ENCODE measurements at regions of chr6 and their contacts with region 1.

Region 1: DNA sequence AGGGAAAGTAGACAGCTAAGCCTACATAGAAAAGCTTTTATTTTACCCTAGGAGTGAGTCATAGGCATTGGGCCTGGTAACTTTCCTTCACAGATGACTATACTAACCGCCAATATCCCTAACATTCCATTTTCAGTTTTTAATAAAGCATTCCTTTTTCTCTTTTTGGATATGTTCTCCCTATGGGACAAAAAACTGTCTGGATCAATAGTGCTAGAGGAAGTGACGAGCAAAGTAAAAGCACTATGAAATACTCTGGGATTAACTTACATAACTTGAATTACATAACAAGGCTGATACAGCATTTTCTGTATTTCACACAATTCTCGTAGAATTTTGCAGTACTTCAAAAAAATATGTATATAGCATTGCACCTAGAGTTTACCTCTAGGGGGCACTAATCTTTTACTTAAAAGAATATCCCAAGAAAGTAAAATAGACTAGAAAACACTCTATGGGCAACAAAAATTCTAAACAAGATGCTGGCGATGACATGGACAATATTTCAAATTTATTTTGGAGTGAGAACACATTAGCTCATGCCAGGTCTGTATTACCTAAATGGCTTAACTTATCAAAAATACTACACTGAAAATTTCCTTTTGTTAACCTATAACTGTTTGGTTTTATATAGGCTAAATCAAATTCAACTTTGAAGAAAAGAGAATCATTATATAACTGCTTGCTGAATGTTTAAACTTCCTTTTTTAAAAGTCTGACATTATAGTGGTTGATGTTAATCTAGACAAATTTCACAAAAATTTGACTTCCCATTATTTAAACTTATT is 66.3 kb upstream of the DST start:
- DNase-seq: no peak
- ATAC-seq: peak; percentile 72
- H3K4me3 ChIP-seq: no peak overlapping the region
- H3K27ac ChIP-seq: 0 out of 2 replicates have a peak overlapping the region, but pooled peaks have one; percentile 1
- H3K4me1 ChIP-seq: peaks cover 8% of the 10 kb centered on the region
- H3K27me3 ChIP-seq: no peaks in the 10 kb centered on the region
- CTCF ChIP-seq: peak; percentile 29 to 54 (median 53); a peak in 4 of 6 replicates
- EP300 ChIP-seq: no peak
- POLR2A ChIP-seq: no peak
- RAD21 ChIP-seq: peak; percentile 45

Region 2: GRCh38 chr6:56292505-56293181 is 416.4 kb before region 1 on chr6:
- CTCF ChIA-PET with region 1: no interaction called
- POLR2A ChIA-PET with region 1: no interaction called
- RAD21 ChIA-PET with region 1: no interaction called
- SMC1A ChIA-PET with region 1: no interaction called
- in situ Hi-C with region 1: no loop called
- intact Hi-C with region 1: no loop called
- DNase-seq: no peak
- ATAC-seq: peak; percentile 70
- H3K4me3 ChIP-seq: no peak overlapping the region
- H3K27ac ChIP-seq: no peak overlapping the region
- H3K4me1 ChIP-seq: no peaks in the 10 kb centered on the region
- H3K27me3 ChIP-seq: no peaks in the 10 kb centered on the region; a peak in 1 of 4 replicates
- CTCF ChIP-seq: peak; percentile 17 to 52 (median 27); a peak in 4 of 6 replicates
- EP300 ChIP-seq: no peak
- POLR2A ChIP-seq: no peak
- RAD21 ChIP-seq: peak; percentile 79

Region 3: GRCh38 chr6:56693246-56693607 is 15.8 kb before region 1 on chr6:
- CTCF ChIA-PET with region 1: interaction called, 37 read pairs
- POLR2A ChIA-PET with region 1: no interaction called
- RAD21 ChIA-PET with region 1: interaction called, 3 read pairs
- SMC1A ChIA-PET with region 1: interaction called, 13 read pairs
- in situ Hi-C with region 1: no loop called
- intact Hi-C with region 1: no loop called
- DNase-seq: no peak
- ATAC-seq: no peak
- H3K4me3 ChIP-seq: no peak overlapping the region
- H3K27ac ChIP-seq: no peak overlapping the region
- H3K4me1 ChIP-seq: peaks cover 12% of the 10 kb centered on the region
- H3K27me3 ChIP-seq: no peaks in the 10 kb centered on the region
- CTCF ChIP-seq: no peak
- EP300 ChIP-seq: no peak
- POLR2A ChIP-seq: no peak
- RAD21 ChIP-seq: no peak

Region 4: DNA sequence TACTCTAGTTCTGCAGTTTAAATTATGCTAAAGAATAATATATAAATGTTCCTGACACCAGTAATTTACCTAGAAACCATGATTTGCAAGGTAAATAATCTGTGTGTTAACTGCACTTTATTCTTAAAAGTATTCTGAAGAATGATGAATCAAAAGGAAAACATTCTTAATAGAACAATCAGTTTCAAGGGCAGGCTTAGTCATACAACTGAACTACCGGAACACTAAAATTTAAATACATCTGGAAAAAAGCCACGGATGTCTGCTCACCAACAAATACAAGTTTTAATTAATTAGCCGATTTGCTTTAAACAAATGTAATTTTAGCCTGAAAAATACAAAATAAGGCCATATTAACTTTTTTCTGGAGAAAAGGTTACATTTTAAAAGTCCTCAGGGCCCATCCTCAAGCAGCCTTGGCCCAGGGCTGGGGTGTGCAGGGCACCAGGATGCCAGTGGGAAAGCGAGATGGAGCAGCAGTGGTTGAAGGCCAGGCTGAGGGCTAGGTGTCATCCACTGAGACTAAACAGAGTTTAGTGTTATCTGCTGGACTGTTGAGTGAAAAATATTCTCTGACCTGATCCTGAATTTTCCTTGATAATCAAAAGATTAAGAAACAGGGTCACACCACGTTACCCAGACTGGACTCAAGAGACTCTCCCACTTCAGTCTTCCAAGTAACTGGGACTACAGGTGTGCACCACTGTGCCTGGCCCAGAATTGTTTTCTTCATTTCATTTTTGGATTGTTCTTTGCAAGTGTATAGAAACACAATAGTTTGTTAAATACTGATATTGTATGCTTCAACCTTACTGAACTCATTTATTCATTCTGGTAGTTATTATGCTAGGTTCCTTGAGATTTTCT is 21.9 kb after region 1 on chr6:
- CTCF ChIA-PET with region 1: interaction called, 105 read pairs
- POLR2A ChIA-PET with region 1: interaction called, 4 read pairs
- RAD21 ChIA-PET with region 1: interaction called, 12 read pairs
- SMC1A ChIA-PET with region 1: interaction called, 17 read pairs
- in situ Hi-C with region 1: no loop called
- intact Hi-C with region 1: no loop called
- DNase-seq: no peak
- ATAC-seq: 0 out of 3 replicates have a peak, but pooled peaks have one; percentile 26
- H3K4me3 ChIP-seq: no peak overlapping the region
- H3K27ac ChIP-seq: no peak overlapping the region
- H3K4me1 ChIP-seq: peaks cover 13% of the 10 kb centered on the region
- H3K27me3 ChIP-seq: no peaks in the 10 kb centered on the region
- CTCF ChIP-seq: no peak
- EP300 ChIP-seq: no peak
- POLR2A ChIP-seq: no peak
- RAD21 ChIP-seq: no peak

Region 5: DNA sequence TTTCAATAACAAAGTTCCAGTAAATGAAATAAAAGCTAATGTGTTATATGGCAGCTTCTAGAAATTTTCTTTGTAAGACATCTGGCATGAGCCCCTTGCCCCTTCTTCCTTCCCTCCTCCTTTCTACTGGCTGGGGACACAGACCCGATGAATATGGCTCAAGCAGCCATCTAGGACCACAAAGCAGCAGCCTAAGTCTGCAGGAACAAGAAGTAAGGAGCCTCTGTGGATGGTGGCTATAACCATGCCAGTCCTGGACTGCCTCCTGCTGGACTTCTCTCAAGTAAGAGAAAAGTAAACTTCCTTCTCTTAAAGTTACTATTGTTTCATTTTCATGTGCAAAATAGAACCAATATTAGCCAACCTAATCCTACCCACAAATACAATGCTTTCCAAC is 48.6 kb after region 1 on chr6:
- CTCF ChIA-PET with region 1: interaction called, 260 read pairs
- POLR2A ChIA-PET with region 1: interaction called, 5 read pairs
- RAD21 ChIA-PET with region 1: interaction called, 181 read pairs
- SMC1A ChIA-PET with region 1: interaction called, 396 read pairs
- in situ Hi-C with region 1: no loop called
- intact Hi-C with region 1: loop called (anchors 1 kb)
- DNase-seq: no peak
- ATAC-seq: peak; percentile 52
- H3K4me3 ChIP-seq: no peak overlapping the region
- H3K27ac ChIP-seq: peak overlapping the region; percentile 54
- H3K4me1 ChIP-seq: peaks cover 76% of the 10 kb centered on the region
- H3K27me3 ChIP-seq: no peaks in the 10 kb centered on the region
- CTCF ChIP-seq: peak; percentile 42 to 49 (median 43); a peak in 5 of 6 replicates
- EP300 ChIP-seq: no peak
- POLR2A ChIP-seq: no peak
- RAD21 ChIP-seq: peak; percentile 75

Region 6: GRCh38 chr6:56772737-56773184 is 63.8 kb after region 1 on chr6:
- CTCF ChIA-PET with region 1: interaction called, 61 read pairs
- POLR2A ChIA-PET with region 1: no interaction called
- RAD21 ChIA-PET with region 1: interaction called, 44 read pairs
- SMC1A ChIA-PET with region 1: interaction called, 396 read pairs
- in situ Hi-C with region 1: no loop called
- intact Hi-C with region 1: no loop called
- DNase-seq: no peak
- ATAC-seq: peak; percentile 53
- H3K4me3 ChIP-seq: no peak overlapping the region
- H3K27ac ChIP-seq: no peak overlapping the region
- H3K4me1 ChIP-seq: peaks cover 41% of the 10 kb centered on the region
- H3K27me3 ChIP-seq: no peaks in the 10 kb centered on the region
- CTCF ChIP-seq: 0 out of 6 replicates have a peak, but pooled peaks of 2 of the 3 experiments have one; percentile 10 to 16
- EP300 ChIP-seq: no peak
- POLR2A ChIP-seq: no peak
- RAD21 ChIP-seq: peak; percentile 25; the same call in 1 of the 2 replicates

Region 7: GRCh38 chr6:56862415-56863175 is 153.6 kb after region 1 on chr6:
- CTCF ChIA-PET with region 1: interaction called, 16 read pairs
- POLR2A ChIA-PET with region 1: no interaction called
- RAD21 ChIA-PET with region 1: interaction called, 4 read pairs
- SMC1A ChIA-PET with region 1: interaction called, 23 read pairs
- in situ Hi-C with region 1: no loop called
- intact Hi-C with region 1: no loop called
- DNase-seq: no peak
- ATAC-seq: peak; percentile 57
- H3K4me3 ChIP-seq: no peak overlapping the region
- H3K27ac ChIP-seq: no peak overlapping the region
- H3K4me1 ChIP-seq: peaks cover 17% of the 10 kb centered on the region
- H3K27me3 ChIP-seq: no peaks in the 10 kb centered on the region
- CTCF ChIP-seq: no peak
- EP300 ChIP-seq: no peak
- POLR2A ChIP-seq: no peak
- RAD21 ChIP-seq: no peak

Region 8: GRCh38 chr6:56984361-56984760 is 275.4 kb after region 1 on chr6:
- CTCF ChIA-PET with region 1: no interaction called
- POLR2A ChIA-PET with region 1: no interaction called
- RAD21 ChIA-PET with region 1: no interaction called
- SMC1A ChIA-PET with region 1: no interaction called
- in situ Hi-C with region 1: no loop called
- intact Hi-C with region 1: no loop called
- DNase-seq: no peak
- ATAC-seq: no peak
- H3K4me3 ChIP-seq: no peak overlapping the region
- H3K27ac ChIP-seq: no peak overlapping the region
- H3K4me1 ChIP-seq: no peaks in the 10 kb centered on the region
- H3K27me3 ChIP-seq: no peaks in the 10 kb centered on the region
- CTCF ChIP-seq: no peak
- EP300 ChIP-seq: no peak
- POLR2A ChIP-seq: no peak
- RAD21 ChIP-seq: no peak

Measured in GM12878 (cell line).